AG04449 (cell line): ENCODE measurements at regions of chr20 and their contacts with region 1.

Region 1: GRCh38 chr20:22691369-22692118 is 107.2 kb upstream of the FOXA2 start:
- DNase-seq: no peak
- H3K4me3 ChIP-seq: no peak overlapping the region
- CTCF ChIP-seq: peak; percentile 80

Region 2: DNA sequence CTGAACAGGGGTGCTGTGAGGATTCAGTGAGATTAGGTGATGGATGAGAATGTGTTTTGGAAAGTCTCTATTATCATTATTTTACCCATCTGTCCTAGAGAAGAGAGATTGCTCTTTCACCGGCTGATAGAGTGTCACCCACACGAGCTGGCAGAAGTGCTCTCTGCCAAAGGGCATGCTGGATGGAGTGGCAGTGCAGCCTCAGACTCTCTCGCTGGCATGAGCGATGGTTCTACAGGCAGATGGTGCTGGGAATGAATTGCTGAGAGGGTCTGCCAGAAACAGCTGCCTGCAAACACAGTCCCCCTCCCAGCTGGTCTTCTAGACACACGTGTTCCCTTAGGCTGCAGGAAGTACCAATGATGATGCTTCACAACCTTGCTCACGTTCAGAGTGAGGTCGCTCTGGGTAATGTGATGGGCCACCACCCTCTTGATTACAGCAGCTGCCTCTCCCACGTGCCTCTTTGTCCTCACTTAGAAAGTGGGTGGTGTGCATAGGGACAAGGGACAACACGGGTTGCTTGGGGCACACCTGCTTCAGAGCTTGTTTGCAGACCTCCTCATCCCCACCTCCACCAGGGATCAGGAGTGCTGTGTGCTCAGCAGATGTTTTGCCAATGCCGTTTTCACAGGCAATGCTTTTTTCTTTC is 191.9 kb before region 1 on chr20:
- CTCF ChIA-PET with region 1: no interaction called
- POLR2A ChIA-PET with region 1: no interaction called
- DNase-seq: no peak
- H3K4me3 ChIP-seq: no peak overlapping the region
- CTCF ChIP-seq: no peak

Region 3: GRCh38 chr20:22679197-22679596 is 12.3 kb before region 1 on chr20:
- CTCF ChIA-PET with region 1: interaction called, 14 read pairs
- POLR2A ChIA-PET with region 1: no interaction called
- DNase-seq: no peak
- H3K4me3 ChIP-seq: no peak overlapping the region
- CTCF ChIP-seq: no peak

Region 4: GRCh38 chr20:23050847-23051631 is 359.5 kb after region 1 on chr20:
- CTCF ChIA-PET with region 1: interaction called, 14 read pairs
- POLR2A ChIA-PET with region 1: no interaction called
- DNase-seq: no peak
- H3K4me3 ChIP-seq: peak overlapping the region; percentile 60
- CTCF ChIP-seq: peak; percentile 78

Region 5: GRCh38 chr20:23245553-23246181 is 554.1 kb after region 1 on chr20:
- CTCF ChIA-PET with region 1: interaction called, 19 read pairs
- POLR2A ChIA-PET with region 1: no interaction called
- DNase-seq: no peak
- H3K4me3 ChIP-seq: no peak overlapping the region
- CTCF ChIP-seq: peak; percentile 65

Region 6: GRCh38 chr20:23340524-23340923 is 649.0 kb after region 1 on chr20:
- CTCF ChIA-PET with region 1: interaction called, 245 read pairs
- POLR2A ChIA-PET with region 1: no interaction called
- DNase-seq: peak; percentile 21
- H3K4me3 ChIP-seq: no peak overlapping the region
- CTCF ChIP-seq: peak; percentile 71